ENCODE measurements at regions of chr21 and their contacts with region 1.

Region 1: GRCh38 chr21:33915368-33916199 is at the start of gene ATP5PO:
- DNase-seq: peak; percentile 97 to 99 (median 98)
- H3K4me3 ChIP-seq: peak within 1 kb of the TSS; percentile 64 to 100 (median 91)
- H3K27ac ChIP-seq: peak within 1 kb of the TSS; percentile 3 to 97 (median 90)
- H3K27me3 ChIP-seq: no peaks in the 10 kb centered on the region
- CTCF ChIP-seq: peak in 38 of 56 donors; percentile 6 to 66 (median 33)
- total RNA-seq, gene ATP5PO: 104 to 254 (median 186) TPM

Region 2: GRCh38 chr21:33931799-33932390 is 16.3 kb after region 1 on chr21:
- intact Hi-C with region 1: no loop called
- DNase-seq: no peak
- H3K4me3 ChIP-seq: peak overlapping the region in 54 of 59 donors; percentile 4 to 56 (median 33)
- H3K27ac ChIP-seq: peak overlapping the region in 8 of 59 donors; percentile 6 to 68 (median 30)
- H3K27me3 ChIP-seq: no peaks in the 10 kb centered on the region
- CTCF ChIP-seq: no peak

Region 3: DNA sequence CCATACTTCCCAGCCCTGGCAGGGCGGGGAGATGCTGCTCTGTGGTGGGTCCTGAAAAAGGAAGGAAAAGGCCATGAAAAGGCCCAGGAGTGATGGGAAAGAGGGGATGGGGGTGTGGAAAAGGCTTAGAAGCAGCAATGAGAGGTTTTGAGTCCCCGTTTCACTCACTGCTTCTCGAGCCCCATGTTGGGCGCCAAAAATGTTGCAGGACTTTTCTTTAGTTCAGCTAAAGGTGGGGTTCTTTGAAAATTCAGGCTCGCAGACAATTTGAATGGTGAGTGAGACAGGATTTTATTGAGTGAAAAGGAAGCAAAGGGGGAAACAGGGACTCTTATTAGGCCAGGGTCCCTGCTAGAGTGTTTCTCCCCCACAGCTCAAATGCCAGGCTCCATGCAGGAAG is 250.9 kb after region 1 on chr21:
- intact Hi-C with region 1: no loop called
- DNase-seq: no peak
- H3K4me3 ChIP-seq: no peak overlapping the region
- H3K27ac ChIP-seq: no peak overlapping the region
- H3K27me3 ChIP-seq: peaks cover 0 to 22% (median 0%) of the 10 kb centered on the region in 45 donors
- CTCF ChIP-seq: no peak

Region 4: GRCh38 chr21:34619841-34620665 is 704.5 kb after region 1 on chr21:
- intact Hi-C with region 1: loop called (anchors 10 kb)
- DNase-seq: no peak
- H3K4me3 ChIP-seq: no peak overlapping the region
- H3K27ac ChIP-seq: no peak overlapping the region
- H3K27me3 ChIP-seq: no peaks in the 10 kb centered on the region
- CTCF ChIP-seq: no peak